CD4-positive, alpha-beta memory T cell (primary cell): ENCODE measurements at regions of chr5 and their contacts with region 1.

Region 1: GRCh38 chr5:86880785-86881492 is 263.2 kb downstream of the COX7C start:
- DNase-seq: peak; percentile 37 to 50 (median 45)
- H3K4me3 ChIP-seq: no peak overlapping the region
- H3K4me3 Mint-ChIP-seq: no peak overlapping the region
- H3K27ac ChIP-seq: no peak overlapping the region
- H3K27ac Mint-ChIP-seq: peak overlapping the region in 1 of 7 donors; percentile 13
- H3K4me1 ChIP-seq: no peaks in the 10 kb centered on the region
- H3K4me1 Mint-ChIP-seq: peaks cover 0 to 1% (median 0%) of the 10 kb centered on the region in 4 donors
- H3K27me3 ChIP-seq: no peaks in the 10 kb centered on the region
- H3K27me3 Mint-ChIP-seq: no peaks in the 10 kb centered on the region

Region 2: GRCh38 chr5:86968301-86968753 is 87.4 kb after region 1 on chr5:
- CTCF ChIA-PET with region 1: interaction called, 22 read pairs
- POLR2A ChIA-PET with region 1: no interaction called
- intact Hi-C with region 1: loop called (anchors 1 kb)
- DNase-seq: peak in 4 of 5 donors; percentile 21 to 25 (median 24)
- H3K4me3 ChIP-seq: no peak overlapping the region
- H3K4me3 Mint-ChIP-seq: no peak overlapping the region
- H3K27ac ChIP-seq: no peak overlapping the region
- H3K27ac Mint-ChIP-seq: peak overlapping the region in 1 of 7 donors; percentile 24
- H3K4me1 ChIP-seq: no peaks in the 10 kb centered on the region
- H3K4me1 Mint-ChIP-seq: peaks cover 0 to 10% (median 5%) of the 10 kb centered on the region in 4 donors
- H3K27me3 ChIP-seq: no peaks in the 10 kb centered on the region
- H3K27me3 Mint-ChIP-seq: peaks cover 2 to 5% of the 10 kb centered on the region in 2 donors

Region 3: DNA sequence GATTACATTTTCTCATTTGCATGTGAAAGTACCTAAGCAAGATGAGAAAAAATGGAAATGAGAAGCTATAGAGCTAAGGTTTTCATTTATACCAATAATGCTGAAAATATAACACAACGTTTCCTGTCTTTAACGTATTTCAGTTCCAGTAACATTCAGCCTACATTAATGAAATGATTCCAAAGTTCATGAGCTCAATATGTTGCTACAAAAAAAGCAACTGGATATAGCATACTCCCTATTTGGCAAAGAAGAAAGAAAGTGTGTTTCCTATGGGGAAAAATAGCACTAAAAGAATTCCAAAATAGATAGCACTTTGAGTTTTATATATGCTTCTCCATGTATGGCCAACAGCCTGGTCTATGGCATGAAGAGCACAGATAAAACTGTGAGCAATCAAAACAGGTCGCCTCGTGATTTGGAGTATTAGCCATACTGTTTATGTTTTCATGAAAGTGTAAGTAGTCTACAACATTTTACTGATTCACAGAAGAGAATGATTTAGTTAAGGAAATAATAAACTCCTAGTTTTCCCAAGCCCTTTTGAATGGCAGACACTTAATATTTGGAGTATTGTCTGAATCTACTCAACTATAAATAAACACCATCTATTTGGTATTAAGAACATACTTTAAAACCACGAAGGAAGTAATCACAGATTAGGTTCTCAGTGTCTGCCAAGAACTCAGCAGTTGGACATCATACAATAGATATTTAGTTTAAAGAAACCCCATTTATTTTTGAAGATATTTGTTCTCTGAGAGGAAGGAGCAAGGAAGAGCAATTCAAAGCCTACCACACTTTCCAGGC is 128.0 kb after region 1 on chr5:
- CTCF ChIA-PET with region 1: interaction called, 6 read pairs
- POLR2A ChIA-PET with region 1: no interaction called
- intact Hi-C with region 1: loop called (anchors 1 kb)
- DNase-seq: no peak
- H3K4me3 ChIP-seq: no peak overlapping the region
- H3K4me3 Mint-ChIP-seq: no peak overlapping the region
- H3K27ac ChIP-seq: no peak overlapping the region
- H3K27ac Mint-ChIP-seq: no peak overlapping the region
- H3K4me1 ChIP-seq: no peaks in the 10 kb centered on the region
- H3K4me1 Mint-ChIP-seq: no peaks in the 10 kb centered on the region
- H3K27me3 ChIP-seq: no peaks in the 10 kb centered on the region
- H3K27me3 Mint-ChIP-seq: no peaks in the 10 kb centered on the region